H1 (cell line): ENCODE measurements at regions of chr3 and their contacts with region 1.

Region 1: GRCh38 chr3:63442918-63443317 is 164.8 kb downstream of the SYNPR start:
- DNase-seq: no peak
- H3K4me3 ChIP-seq: no peak overlapping the region
- H3K27ac ChIP-seq: no peak overlapping the region
- H3K4me1 ChIP-seq: peaks cover 4 to 23% (median 15%) of the 10 kb centered on the region in 4 experiments
- H3K27me3 ChIP-seq: no peaks in the 10 kb centered on the region
- CTCF ChIP-seq: no peak
- EP300 ChIP-seq: no peak
- POLR2A ChIP-seq: no peak
- RAD21 ChIP-seq: no peak

Region 2: GRCh38 chr3:63429905-63430304 is 13.0 kb before region 1 on chr3:
- CTCF ChIA-PET with region 1: interaction called, 27 read pairs
- POLR2A ChIA-PET with region 1: interaction called, 3 read pairs
- DNase-seq: no peak
- H3K4me3 ChIP-seq: no peak overlapping the region
- H3K27ac ChIP-seq: no peak overlapping the region
- H3K4me1 ChIP-seq: peaks cover 0 to 6% (median 1%) of the 10 kb centered on the region in 4 experiments; a peak in 2 of 7 replicates
- H3K27me3 ChIP-seq: no peaks in the 10 kb centered on the region
- CTCF ChIP-seq: no peak
- EP300 ChIP-seq: no peak
- POLR2A ChIP-seq: no peak
- RAD21 ChIP-seq: no peak

Region 3: DNA sequence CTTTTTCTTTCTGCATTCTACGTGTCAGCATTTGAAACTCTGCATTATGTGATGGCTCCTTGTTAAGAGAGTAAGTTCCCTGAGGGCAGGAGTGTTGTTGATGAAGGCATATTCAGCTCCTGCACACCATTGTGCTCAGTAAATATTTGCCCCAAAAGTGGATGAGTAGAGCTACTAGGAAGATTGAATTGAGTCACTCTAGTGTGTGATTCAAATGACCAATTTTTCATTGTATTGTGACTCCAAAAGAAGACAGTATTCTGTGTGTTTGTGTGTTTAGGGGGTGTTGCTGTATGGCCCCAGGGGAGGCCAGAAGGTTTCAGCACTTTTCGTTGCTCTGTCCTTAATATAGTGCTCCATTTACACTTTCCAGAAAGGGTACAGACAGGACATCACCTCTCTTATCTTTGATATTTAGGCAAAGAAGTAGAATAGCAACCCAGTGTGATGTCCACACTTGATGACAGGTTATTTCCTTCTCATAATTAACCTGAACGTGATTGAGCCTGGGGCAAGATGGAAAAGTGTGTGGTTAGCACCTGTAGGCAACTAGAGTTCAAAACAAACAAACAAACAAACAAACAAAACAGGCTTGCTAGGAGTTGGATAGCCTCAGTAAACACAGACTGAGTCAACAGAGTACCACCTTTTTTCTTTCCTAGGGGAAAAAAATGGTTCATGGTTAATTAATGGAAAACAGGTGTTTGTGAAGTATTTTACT is 474.9 kb after region 1 on chr3:
- CTCF ChIA-PET with region 1: no interaction called
- POLR2A ChIA-PET with region 1: no interaction called
- DNase-seq: no peak
- H3K4me3 ChIP-seq: no peak overlapping the region
- H3K27ac ChIP-seq: no peak overlapping the region
- H3K4me1 ChIP-seq: peaks cover 0 to 2% (median 0%) of the 10 kb centered on the region in 4 experiments; a peak in 3 of 7 replicates
- H3K27me3 ChIP-seq: no peaks in the 10 kb centered on the region
- CTCF ChIP-seq: no peak
- EP300 ChIP-seq: no peak
- POLR2A ChIP-seq: no peak
- RAD21 ChIP-seq: no peak